ENCODE measurements at regions of chr1 and their contacts with region 1.

Region 1: DNA sequence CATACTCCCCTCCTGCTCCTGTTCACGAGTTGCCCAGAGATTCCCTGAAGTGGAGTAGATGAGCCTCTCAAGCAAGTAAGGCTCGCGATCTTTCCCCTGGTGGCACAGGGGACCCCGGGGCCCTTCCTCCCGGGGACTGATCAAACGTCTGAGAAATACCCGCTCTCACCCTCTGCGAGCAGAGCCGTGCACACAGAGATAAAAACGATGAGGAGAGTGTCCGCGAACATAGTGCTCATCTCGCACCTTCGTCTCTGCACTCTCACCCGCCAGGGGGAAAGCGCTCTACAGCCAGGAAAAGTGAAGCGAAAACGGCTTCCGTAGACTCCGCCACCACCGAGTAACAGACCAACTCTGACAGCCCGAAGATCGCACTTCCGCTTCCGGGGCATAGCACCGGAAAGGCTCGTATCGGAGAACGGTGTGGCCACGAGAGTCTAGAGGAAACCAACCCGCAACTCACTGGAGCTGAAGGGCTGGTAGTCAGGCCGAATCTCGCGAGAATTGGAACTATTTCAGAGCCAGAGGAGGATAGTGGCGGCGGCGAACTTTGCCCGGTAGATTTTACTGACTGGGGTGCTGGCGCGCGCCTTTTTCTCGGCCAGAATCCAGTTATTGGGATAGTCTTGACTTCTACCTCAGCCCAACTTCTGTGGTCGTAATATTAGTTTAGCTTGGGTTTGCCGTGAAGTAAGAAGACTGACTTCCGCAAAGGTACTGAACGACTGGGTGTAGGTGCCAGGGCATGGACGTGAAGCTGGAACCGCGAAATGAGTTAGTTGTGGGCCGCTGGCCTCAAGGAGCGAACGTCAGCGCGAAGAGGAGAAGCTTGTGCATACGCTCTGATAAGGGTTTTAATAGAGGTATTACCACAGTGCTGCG is at the start of gene TMCO1:
- DNase-seq: peak; percentile 96
- ATAC-seq: peak; percentile 100
- total RNA-seq, gene TMCO1: 47.3 TPM

Region 2: DNA sequence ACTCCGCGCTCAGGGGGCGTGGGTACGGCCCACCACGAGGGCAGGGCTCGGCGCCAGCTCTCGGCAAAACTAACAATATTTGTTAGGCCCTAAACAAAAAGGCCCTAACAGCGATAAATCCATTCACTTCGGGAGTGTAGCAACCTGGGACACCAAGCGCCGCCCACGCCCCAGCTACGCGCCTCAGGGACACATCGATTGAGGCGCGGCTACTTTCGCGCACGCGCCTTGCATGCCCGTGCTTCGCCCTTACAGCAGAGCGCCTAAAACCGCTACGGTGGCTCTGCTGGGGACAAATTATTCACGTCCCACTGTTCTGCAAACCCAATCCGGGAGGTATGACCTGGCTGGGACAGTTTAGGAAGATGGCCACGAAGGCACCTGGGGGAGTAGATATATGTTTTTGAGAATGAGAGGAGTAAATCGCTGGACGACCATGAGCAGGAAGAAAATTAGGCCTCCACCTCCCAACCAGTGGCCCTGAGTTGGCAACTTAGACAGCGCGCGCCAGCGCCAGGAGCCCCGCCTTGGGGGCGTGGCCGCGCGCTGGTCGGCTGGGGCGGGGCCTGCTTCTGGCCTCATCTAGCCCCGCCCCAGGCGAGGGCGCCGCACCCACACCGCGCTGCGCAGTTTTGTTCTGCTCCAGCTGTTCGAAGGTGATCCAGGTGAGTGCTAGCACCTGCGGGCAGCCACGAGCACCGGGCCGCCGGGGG is 138.0 kb before region 1 on chr1 and contains the start of gene MGST3:
- intact Hi-C with region 1: loop called (anchors 5 kb)
- DNase-seq: peak; percentile 99
- ATAC-seq: peak; percentile 98
- total RNA-seq, gene MGST3: 628 TPM

Region 3: GRCh38 chr1:165697881-165698760 is 70.6 kb before region 1 on chr1 and contains the start of gene ALDH9A1:
- intact Hi-C with region 1: loop called (anchors 2 kb)
- DNase-seq: peak; percentile 95
- ATAC-seq: peak; percentile 98
- total RNA-seq, gene ALDH9A1: 57.3 TPM

Region 4: DNA sequence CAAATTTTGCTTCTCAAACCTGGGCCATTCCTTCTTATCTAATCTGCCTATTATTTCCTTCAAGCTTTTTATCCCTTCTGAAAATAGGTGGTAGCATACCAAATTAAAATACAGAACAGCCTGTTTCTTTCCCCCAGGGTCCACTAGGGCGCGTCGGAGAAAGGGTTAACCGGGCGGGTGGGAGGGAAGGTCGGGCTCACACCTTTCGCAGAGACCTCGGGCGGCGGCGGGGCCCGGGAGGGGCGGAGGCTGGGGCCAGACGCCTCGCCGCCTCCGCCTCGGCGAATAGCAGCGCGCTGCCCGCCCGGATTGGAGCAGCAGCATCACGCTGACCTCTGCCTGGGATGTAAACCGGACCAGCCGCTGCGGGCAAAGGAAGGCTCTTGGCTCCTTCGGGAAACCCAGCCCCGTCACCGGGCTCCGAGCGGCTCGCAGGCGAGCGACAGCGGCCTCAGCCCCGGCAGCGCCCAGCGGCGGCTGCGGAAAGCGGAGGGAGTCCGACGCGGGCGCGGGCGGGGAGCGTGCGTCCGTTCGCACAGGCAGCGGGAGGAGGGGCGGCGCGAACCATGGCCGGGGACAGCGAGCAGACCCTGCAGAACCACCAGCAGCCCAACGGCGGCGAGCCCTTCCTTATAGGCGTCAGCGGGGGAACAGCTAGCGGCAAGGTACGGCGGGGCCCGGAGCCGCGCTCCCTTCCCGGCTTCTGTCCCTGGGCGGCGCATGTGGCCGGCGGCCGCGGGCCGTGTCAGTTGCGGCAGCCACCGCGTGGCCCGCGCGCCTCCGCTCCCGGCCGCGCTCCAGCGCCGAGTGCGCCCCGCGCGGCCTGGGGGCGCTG is 58.7 kb after region 1 on chr1 and contains the start of gene UCK2:
- intact Hi-C with region 1: loop called (anchors 2 kb)
- DNase-seq: peak; percentile 89
- ATAC-seq: peak; percentile 94
- total RNA-seq, gene UCK2: 8.4 TPM